ENCODE measurements at regions of chr3 and their contacts with region 1.

Region 1: GRCh38 chr3:160372780-160373179 is 26.2 kb downstream of the IFT80 start:
- DNase-seq: no peak
- H3K4me3 ChIP-seq: no peak overlapping the region
- H3K27ac ChIP-seq: no peak overlapping the region
- H3K4me1 ChIP-seq: no peaks in the 10 kb centered on the region
- H3K27me3 ChIP-seq: no peaks in the 10 kb centered on the region
- CTCF ChIP-seq: no peak
- EP300 ChIP-seq: no peak
- POLR2A ChIP-seq: no peak

Region 2: GRCh38 chr3:161203485-161204098 is 830.8 kb after region 1 on chr3:
- in situ Hi-C with region 1: no loop called
- intact Hi-C with region 1: loop called (anchors 10 kb)
- DNase-seq: no peak
- H3K4me3 ChIP-seq: no peak overlapping the region
- H3K27ac ChIP-seq: no peak overlapping the region
- H3K4me1 ChIP-seq: no peaks in the 10 kb centered on the region
- H3K27me3 ChIP-seq: no peaks in the 10 kb centered on the region
- CTCF ChIP-seq: no peak
- EP300 ChIP-seq: no peak
- POLR2A ChIP-seq: no peak